AG04450 (cell line): ENCODE measurements at regions of chr14 and their contacts with region 1.

Region 1: DNA sequence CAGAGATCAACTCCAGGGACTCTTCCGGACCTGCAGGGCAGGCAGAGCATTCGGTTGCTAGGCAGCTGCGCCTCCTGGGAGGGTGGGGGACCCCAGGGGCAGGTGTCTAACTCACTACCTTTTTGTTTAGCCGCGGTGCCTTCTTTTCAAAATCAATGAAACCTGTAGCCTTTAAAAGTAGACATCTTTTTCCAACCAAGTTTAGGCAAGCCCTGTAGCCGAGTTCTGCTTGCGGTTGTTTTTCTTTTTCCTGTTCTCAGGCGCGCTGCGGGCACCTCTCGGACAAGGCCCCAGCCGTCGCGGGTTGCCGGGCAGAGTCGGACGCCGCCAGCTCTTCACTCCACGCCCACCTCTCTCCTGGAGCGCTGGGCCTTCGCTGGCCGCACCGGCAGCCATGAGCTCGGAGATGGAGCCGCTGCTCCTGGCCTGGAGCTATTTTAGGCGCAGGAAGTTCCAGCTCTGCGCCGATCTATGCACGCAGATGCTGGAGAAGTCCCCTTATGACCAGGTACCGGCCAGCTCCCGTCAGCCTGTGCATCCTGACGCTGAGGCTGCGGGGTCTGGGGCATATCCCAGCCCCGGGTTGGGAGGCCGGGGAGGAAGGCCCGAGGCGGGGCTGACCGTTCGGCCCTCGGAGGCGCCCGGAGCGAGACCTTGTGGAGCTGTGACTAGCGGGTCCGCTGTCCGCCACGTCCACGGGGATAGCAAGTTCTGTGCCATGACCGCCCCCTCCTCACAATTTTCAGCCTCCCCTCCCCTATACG is at the start of gene TTC8:
- DNase-seq: peak; percentile 70
- H3K4me3 ChIP-seq: peak within 1 kb of the TSS; percentile 82
- H3K27ac ChIP-seq: peak within 1 kb of the TSS; percentile 80
- H3K27me3 ChIP-seq: no peaks in the 10 kb centered on the region
- CTCF ChIP-seq: no peak
- polyA plus RNA-seq, gene TTC8: 70.7 and 83.4 TPM in 2 replicates

Region 2: DNA sequence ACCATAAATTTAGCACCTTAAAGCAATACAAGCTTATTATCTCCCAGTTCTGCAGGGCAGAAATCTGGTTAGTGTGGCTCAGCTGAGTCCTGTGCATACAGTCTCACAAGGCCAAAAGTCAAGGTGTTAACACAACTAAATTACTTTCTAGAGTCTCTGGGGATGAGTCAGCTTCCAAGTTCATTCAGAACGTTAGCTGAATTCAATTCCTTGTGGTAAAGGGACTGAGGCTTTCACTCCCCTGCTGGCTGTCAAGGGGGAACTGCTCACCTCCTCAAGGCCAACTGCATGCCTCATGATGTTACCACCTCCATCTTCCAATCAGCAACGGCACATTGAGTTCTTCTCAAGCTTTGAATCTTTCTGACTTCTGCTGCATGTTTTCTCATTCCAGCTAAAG is 59.4 kb before region 1 on chr14:
- CTCF ChIA-PET with region 1: no interaction called
- POLR2A ChIA-PET with region 1: no interaction called
- DNase-seq: no peak
- H3K4me3 ChIP-seq: no peak overlapping the region
- H3K27ac ChIP-seq: no peak overlapping the region
- H3K27me3 ChIP-seq: no peaks in the 10 kb centered on the region
- CTCF ChIP-seq: no peak

Region 3: DNA sequence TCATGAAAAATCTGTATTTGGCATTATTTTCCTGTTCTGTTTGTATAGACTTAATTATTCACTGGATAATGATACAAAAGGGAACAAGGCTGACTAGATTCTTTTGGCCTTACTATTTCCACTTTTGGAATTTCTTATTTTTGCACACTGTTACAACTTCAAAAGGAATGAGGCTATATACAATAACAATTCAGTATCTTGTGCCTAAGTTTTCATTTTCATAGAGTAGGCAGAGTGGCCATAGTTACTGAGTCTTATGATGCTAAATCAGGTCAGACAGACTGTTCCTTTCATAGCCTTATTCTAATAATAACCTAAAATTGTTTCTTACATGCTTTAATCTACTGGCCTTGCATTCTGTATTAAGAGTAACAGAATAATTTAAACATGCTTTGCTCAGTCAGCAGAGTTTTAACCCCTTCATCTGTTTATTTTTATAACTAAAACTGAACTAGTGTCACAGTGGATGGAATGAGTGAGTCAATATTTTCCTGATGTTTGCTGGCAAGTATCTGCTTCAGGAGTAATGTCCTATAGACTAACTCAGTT is 10.5 kb after region 1 on chr14:
- CTCF ChIA-PET with region 1: interaction called, 6 read pairs
- POLR2A ChIA-PET with region 1: interaction called, 18 read pairs
- DNase-seq: peak; percentile 39
- H3K4me3 ChIP-seq: no peak overlapping the region
- H3K27ac ChIP-seq: no peak overlapping the region
- H3K27me3 ChIP-seq: no peaks in the 10 kb centered on the region
- CTCF ChIP-seq: no peak

Region 4: DNA sequence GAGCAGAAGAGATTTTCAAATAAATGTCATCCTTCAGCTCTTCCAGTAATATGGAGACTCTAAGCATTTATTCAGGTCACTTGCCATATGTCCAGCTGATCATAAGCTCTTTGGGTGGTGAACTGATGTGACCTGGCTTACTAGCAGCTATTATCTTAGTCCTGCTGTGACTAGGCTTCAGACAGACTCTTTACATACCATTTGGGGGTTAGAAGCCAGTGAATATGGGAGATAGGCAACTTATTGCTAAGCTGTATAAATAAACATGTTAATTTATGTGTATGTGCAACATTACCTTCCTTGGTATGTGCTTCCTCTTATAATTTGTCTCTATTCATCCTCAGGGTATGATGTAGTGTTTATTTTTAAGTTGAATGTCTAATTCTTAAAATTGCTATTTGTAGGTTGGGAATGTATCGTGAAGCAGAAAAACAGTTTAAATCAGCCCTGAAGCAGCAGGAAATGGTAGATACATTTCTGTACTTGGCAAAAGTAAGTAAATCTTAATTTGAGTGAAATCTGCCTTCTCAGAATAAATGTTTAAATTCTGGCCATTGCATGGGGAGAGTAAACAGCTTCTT is 32.4 kb after region 1 on chr14:
- CTCF ChIA-PET with region 1: no interaction called
- POLR2A ChIA-PET with region 1: interaction called, 17 read pairs
- DNase-seq: no peak
- H3K4me3 ChIP-seq: no peak overlapping the region
- H3K27ac ChIP-seq: no peak overlapping the region
- H3K27me3 ChIP-seq: no peaks in the 10 kb centered on the region
- CTCF ChIP-seq: no peak

Region 5: DNA sequence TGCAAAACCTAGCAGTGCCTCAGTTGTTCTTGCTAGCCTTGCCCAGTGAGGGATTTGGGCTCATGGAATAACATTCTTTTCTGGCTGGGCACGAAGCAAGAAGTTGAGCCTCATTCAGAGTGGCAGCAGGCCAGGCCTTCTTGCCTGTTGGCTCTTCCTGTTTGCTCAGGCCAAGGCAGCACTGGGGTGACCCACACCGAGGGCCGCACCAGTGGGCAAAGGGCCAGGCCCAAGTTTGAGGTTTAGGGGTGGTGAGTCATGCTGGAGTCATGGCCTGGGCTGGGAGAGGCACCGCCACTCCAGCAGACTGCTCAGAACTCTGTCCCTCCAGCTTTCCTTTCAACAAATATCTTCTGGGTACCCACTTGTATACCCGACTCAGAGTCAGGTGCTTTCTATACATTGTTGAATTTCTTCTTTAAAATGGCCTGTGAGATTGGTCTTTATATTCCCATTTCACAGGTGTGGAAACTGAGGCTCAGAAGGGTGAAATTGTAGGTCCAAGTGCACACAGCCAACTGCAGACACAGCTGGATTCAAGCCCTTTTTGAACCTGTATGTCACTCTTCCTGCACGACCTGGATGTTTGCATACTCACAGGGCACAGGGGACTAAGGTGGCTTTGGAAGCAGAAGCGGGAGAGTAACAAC is 313.1 kb after region 1 on chr14:
- CTCF ChIA-PET with region 1: no interaction called
- POLR2A ChIA-PET with region 1: no interaction called
- DNase-seq: peak; percentile 71
- H3K4me3 ChIP-seq: no peak overlapping the region
- H3K27ac ChIP-seq: no peak overlapping the region
- H3K27me3 ChIP-seq: no peaks in the 10 kb centered on the region
- CTCF ChIP-seq: no peak